Endothelial cell of umbilical vein (primary cell): ENCODE measurements at regions of chr14 and their contacts with region 1.

Region 1: GRCh38 chr14:32588448-32589320 is 259.6 kb downstream of the AKAP6 start:
- DNase-seq: peak; percentile 36
- H3K4me3 ChIP-seq: no peak overlapping the region
- H3K27ac ChIP-seq: no peak overlapping the region
- H3K4me1 ChIP-seq: no peaks in the 10 kb centered on the region
- H3K27me3 ChIP-seq: peaks cover 2 to 6% of the 10 kb centered on the region in 2 experiments
- CTCF ChIP-seq: peak; percentile 45 to 54
- POLR2A ChIP-seq: no peak

Region 2: GRCh38 chr14:32567602-32568384 is 20.9 kb before region 1 on chr14:
- CTCF ChIA-PET with region 1: no interaction called
- POLR2A ChIA-PET with region 1: no interaction called
- dilution Hi-C with region 1: no loop called
- intact Hi-C with region 1: no loop called
- DNase-seq: peak; percentile 40
- H3K4me3 ChIP-seq: no peak overlapping the region
- H3K27ac ChIP-seq: no peak overlapping the region
- H3K4me1 ChIP-seq: peaks cover 2% of the 10 kb centered on the region
- H3K27me3 ChIP-seq: peaks cover 5 to 6% of the 10 kb centered on the region in 2 experiments
- CTCF ChIP-seq: no peak
- POLR2A ChIP-seq: no peak

Region 3: GRCh38 chr14:32702562-32702961 is 113.9 kb after region 1 on chr14:
- CTCF ChIA-PET with region 1: no interaction called
- POLR2A ChIA-PET with region 1: no interaction called
- dilution Hi-C with region 1: no loop called
- intact Hi-C with region 1: loop called (anchors 2 kb)
- DNase-seq: peak; percentile 24
- H3K4me3 ChIP-seq: no peak overlapping the region
- H3K27ac ChIP-seq: peak overlapping the region; percentile 2
- H3K4me1 ChIP-seq: peaks cover 7% of the 10 kb centered on the region
- H3K27me3 ChIP-seq: peaks cover 2 to 3% of the 10 kb centered on the region in 2 experiments
- CTCF ChIP-seq: no peak
- POLR2A ChIP-seq: no peak

Region 4: GRCh38 chr14:32998433-32998832 is 409.7 kb after region 1 on chr14:
- CTCF ChIA-PET with region 1: no interaction called
- POLR2A ChIA-PET with region 1: no interaction called
- dilution Hi-C with region 1: no loop called
- intact Hi-C with region 1: loop called (anchors 1 kb)
- DNase-seq: peak; percentile 21
- H3K4me3 ChIP-seq: no peak overlapping the region
- H3K27ac ChIP-seq: no peak overlapping the region
- H3K4me1 ChIP-seq: no peaks in the 10 kb centered on the region
- H3K27me3 ChIP-seq: peaks cover 0 to 1% of the 10 kb centered on the region in 2 experiments
- CTCF ChIP-seq: peak; percentile 22 to 49
- POLR2A ChIP-seq: no peak

Region 5: DNA sequence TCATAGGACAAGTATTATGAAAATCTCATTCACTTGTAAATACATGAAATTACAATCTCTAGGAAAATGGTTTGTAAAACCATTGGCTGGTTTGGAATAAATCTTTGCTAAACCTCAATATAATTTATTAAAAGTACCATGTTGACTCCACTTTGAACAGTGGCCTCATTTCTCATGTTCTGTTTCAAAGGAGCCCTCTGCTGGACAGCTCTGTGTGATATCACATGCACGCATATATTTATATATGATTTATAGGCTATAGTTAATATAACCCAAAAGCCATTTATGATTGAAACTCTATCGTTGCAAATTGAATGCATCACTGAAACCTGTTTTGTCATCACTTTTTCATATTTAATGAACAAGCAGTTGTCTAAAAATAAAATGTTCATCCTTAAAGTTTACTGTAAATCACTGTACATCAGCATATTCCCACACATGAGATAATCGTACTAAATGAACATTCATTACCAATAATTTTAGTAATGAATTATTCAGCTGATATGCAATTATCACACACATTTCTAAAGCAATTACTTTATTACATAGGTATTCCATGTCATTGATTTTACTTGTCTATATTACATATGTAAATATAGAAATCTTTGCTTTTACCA is 843.8 kb after region 1 on chr14:
- CTCF ChIA-PET with region 1: no interaction called
- POLR2A ChIA-PET with region 1: no interaction called
- dilution Hi-C with region 1: no loop called
- intact Hi-C with region 1: loop called (anchors 1 kb)
- DNase-seq: peak; percentile 43
- H3K4me3 ChIP-seq: no peak overlapping the region
- H3K27ac ChIP-seq: no peak overlapping the region
- H3K4me1 ChIP-seq: no peaks in the 10 kb centered on the region
- H3K27me3 ChIP-seq: no peaks in the 10 kb centered on the region
- CTCF ChIP-seq: peak; percentile 17 to 33
- POLR2A ChIP-seq: no peak